Motor neuron (in vitro differentiated cells): ENCODE measurements at regions of chr9 and their contacts with region 1.

Region 1: DNA sequence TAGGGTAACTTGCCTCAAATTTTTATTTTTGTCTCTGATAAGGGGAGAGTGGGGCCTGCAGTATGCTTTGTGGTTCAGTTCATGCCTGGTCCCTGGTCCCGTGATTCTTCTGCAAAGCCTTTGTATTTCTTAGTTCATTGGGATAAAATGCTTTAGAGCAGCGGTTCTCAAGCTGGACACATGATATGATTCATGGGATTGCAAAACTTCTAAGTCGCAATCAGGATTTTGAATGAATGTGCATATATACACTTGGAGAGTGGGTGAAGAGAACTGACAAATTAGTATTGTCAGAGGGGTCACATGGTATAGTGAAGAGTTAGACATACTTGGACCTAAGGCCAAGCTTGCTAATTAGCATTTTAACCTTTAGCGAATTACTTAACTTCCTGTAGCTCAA is 265.4 kb upstream of the KLF9 start:
- ATAC-seq: peak in 2 of 8 experiments; percentile 38 to 65
- H3K4me3 ChIP-seq: no peak overlapping the region
- H3K27ac ChIP-seq: no peak overlapping the region
- H3K4me1 ChIP-seq: no peaks in the 10 kb centered on the region

Region 2: DNA sequence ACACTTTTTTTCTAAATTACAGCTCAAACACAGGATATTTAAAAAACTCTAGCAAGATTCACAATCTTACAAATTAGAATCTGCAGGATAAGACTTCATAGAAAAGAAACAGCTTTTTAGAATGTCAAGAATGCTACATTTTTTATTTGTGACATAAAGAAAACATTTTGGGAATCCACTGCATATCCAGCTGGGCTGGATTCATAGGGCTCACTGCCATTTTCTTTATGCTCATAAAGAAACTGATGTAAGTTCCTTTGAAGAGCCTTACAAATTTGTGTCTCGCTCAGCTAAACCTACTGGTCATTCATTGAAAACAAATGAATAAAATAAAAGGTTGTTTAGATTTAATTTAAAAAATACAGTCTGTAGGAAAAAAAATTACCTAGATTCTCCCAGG is 109.2 kb after region 1 on chr9:
- in situ Hi-C with region 1: loop called in 1 of 9 experiments (anchors 25 kb)
- ATAC-seq: no peak
- H3K4me3 ChIP-seq: no peak overlapping the region
- H3K27ac ChIP-seq: no peak overlapping the region
- H3K4me1 ChIP-seq: no peaks in the 10 kb centered on the region